ENCODE measurements at regions of chr9 and their contacts with region 1.

Region 1: GRCh38 chr9:135085830-135086546 is 1.5 kb upstream of the OLFM1 start:
- DNase-seq: peak; percentile 65 to 95
- H3K4me3 ChIP-seq: no peak overlapping the region
- CTCF ChIP-seq: peak in 1 of 3 donors; percentile 91
- POLR2A ChIP-seq: no peak

Region 2: GRCh38 chr9:134936346-134937163 is 149.4 kb before region 1 on chr9:
- intact Hi-C with region 1: no loop called
- DNase-seq: no peak
- H3K4me3 ChIP-seq: no peak overlapping the region
- CTCF ChIP-seq: no peak
- POLR2A ChIP-seq: no peak

Region 3: DNA sequence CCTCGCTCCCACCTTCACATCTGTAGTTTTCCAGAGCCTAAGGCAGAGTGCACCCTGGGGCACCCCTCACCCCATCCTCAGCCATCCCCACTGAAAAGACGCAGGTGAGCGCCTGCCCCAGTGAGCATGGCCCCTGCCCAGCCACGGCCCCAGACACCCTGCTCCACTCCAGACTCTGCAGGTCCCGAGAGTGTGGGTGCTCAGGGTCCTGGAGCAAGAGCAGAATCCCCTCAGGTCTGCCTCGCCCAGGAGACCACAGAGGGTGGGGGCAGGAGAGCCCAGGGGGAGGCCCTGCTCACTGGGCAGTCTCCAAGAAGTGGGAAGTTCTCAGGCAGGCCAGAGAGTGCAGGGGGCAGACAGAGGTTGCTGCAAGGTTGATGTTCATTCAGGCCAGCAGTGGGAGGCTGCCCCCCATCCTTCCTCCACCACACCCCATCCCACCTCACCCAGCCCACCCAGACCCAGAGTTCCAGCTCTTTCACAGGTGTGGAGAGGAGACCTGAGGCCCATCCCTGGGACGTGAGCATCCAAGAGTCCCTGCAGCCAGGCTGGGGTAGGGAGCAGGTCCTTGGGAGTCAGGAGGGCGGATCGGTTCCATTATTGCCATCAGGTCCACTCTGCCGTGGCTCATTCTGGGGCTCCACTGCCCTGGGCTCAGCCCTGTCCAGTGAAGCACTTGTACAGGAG is 235.1 kb after region 1 on chr9:
- intact Hi-C with region 1: no loop called
- DNase-seq: no peak
- H3K4me3 ChIP-seq: no peak overlapping the region
- CTCF ChIP-seq: no peak
- POLR2A ChIP-seq: no peak

Region 4: GRCh38 chr9:135343837-135344522 is 258.0 kb after region 1 on chr9:
- intact Hi-C with region 1: loop called (anchors 5 kb)
- DNase-seq: peak in 1 of 2 donors; percentile 20
- H3K4me3 ChIP-seq: no peak overlapping the region
- CTCF ChIP-seq: peak in 1 of 3 donors; percentile 28
- POLR2A ChIP-seq: no peak

Region 5: GRCh38 chr9:135410831-135411473 is 325.0 kb after region 1 on chr9:
- intact Hi-C with region 1: loop called (anchors 5 kb)
- DNase-seq: peak in 1 of 2 donors; percentile 58
- H3K4me3 ChIP-seq: no peak overlapping the region
- CTCF ChIP-seq: no peak
- POLR2A ChIP-seq: no peak